CD4-positive, alpha-beta T cell (primary cell): ENCODE measurements at regions of chr9 and their contacts with region 1.

Region 1: DNA sequence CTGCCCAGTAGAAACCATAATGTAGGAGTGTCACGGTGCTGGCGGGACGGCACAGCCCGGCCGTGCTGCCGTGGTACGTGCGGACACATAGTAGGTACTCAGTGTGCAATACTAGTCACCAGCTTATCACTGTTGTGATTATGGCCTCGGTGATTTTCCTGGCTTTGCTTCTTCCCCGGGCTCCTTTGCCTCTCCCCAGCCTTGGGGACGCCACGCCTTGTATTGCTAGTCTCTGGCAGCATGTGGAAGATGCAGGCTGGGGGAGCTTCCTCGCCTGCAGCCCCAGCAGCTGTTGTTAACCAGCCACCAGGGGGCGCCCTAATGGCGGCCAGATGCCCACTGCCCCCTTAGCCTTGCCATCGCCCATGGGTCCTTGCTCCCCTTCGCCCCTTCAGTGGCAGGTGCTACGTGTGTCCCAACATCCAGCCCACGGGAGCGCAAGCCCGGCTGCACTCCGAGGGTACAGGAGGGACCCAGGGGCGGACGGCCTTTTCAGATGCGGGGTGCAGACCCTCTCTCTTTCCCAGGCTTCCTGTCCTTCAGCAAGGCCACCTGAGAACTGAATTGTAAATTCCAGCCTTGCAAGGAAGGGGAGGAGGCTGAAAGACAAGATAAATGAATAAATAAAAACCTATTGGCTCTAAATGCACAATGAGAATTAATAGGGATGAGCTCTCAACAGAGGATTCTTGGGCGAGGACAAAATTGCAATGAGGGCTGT is 8.0 kb downstream of the NTNG2 start:
- DNase-seq: peak; percentile 24 to 78 (median 50)
- ATAC-seq: peak; percentile 52
- H3K4me3 ChIP-seq: no peak overlapping the region
- H3K4me3 Mint-ChIP-seq: no peak overlapping the region
- H3K27ac ChIP-seq: no peak overlapping the region
- H3K27ac Mint-ChIP-seq: no peak overlapping the region
- H3K4me1 ChIP-seq: no peaks in the 10 kb centered on the region
- H3K4me1 Mint-ChIP-seq: no peaks in the 10 kb centered on the region
- H3K27me3 ChIP-seq: peaks cover 20 to 33% of the 10 kb centered on the region in 2 experiments
- H3K27me3 Mint-ChIP-seq: peaks cover 56% of the 10 kb centered on the region
- CTCF ChIP-seq: peak; percentile 93

Region 2: GRCh38 chr9:132032238-132032950 is 137.4 kb before region 1 on chr9:
- CTCF ChIA-PET with region 1: no interaction called
- POLR2A ChIA-PET with region 1: no interaction called
- intact Hi-C with region 1: no loop called
- DNase-seq: no peak
- ATAC-seq: no peak
- H3K4me3 ChIP-seq: no peak overlapping the region
- H3K4me3 Mint-ChIP-seq: no peak overlapping the region
- H3K27ac ChIP-seq: no peak overlapping the region
- H3K27ac Mint-ChIP-seq: no peak overlapping the region
- H3K4me1 ChIP-seq: peaks cover 5% of the 10 kb centered on the region
- H3K4me1 Mint-ChIP-seq: peaks cover 59% of the 10 kb centered on the region
- H3K27me3 ChIP-seq: no peaks in the 10 kb centered on the region
- H3K27me3 Mint-ChIP-seq: no peaks in the 10 kb centered on the region
- CTCF ChIP-seq: no peak

Region 3: DNA sequence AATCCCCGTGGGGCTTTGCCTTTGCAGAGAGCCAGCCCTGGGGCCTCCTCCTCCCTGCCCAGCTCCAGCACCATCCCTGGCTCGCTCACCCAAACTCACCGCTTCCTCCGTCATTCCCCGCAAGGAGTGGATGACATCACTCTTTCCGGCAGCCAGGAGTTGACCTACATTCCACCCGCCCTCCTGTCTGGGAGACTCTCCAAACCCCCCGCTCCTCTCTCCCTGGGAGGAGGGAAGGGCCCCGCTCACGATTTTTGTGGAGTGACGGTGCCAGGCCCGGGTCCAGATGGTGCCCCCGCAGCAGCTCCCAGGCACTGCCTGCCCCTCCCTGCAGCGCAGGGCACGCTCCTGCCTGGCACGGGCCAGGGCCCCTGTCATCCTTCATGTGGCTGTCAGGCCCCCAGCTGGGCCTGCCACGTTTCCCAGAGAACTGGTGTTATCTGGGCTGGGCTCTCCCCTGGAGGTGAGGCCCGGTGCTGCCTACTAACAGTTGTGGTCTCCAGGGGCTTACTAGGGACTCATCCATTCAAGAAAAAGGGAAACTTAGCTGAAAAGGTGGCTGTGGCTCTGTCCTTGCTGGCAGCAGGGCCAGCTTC is 44.3 kb after region 1 on chr9:
- CTCF ChIA-PET with region 1: no interaction called
- POLR2A ChIA-PET with region 1: no interaction called
- intact Hi-C with region 1: no loop called
- DNase-seq: no peak
- ATAC-seq: no peak
- H3K4me3 ChIP-seq: no peak overlapping the region
- H3K4me3 Mint-ChIP-seq: no peak overlapping the region
- H3K27ac ChIP-seq: no peak overlapping the region
- H3K27ac Mint-ChIP-seq: no peak overlapping the region
- H3K4me1 ChIP-seq: no peaks in the 10 kb centered on the region
- H3K4me1 Mint-ChIP-seq: no peaks in the 10 kb centered on the region
- H3K27me3 ChIP-seq: no peaks in the 10 kb centered on the region
- H3K27me3 Mint-ChIP-seq: peaks cover 10% of the 10 kb centered on the region
- CTCF ChIP-seq: no peak

Region 4: GRCh38 chr9:132249123-132249522 is 79.3 kb after region 1 on chr9:
- CTCF ChIA-PET with region 1: interaction called, 4 read pairs
- POLR2A ChIA-PET with region 1: no interaction called
- intact Hi-C with region 1: loop called in 1 of 2 experiments (anchors 1 kb)
- DNase-seq: no peak
- ATAC-seq: no peak
- H3K4me3 ChIP-seq: no peak overlapping the region
- H3K4me3 Mint-ChIP-seq: no peak overlapping the region
- H3K27ac ChIP-seq: no peak overlapping the region
- H3K27ac Mint-ChIP-seq: no peak overlapping the region
- H3K4me1 ChIP-seq: peaks cover 3% of the 10 kb centered on the region
- H3K4me1 Mint-ChIP-seq: no peaks in the 10 kb centered on the region
- H3K27me3 ChIP-seq: peaks cover 6 to 10% of the 10 kb centered on the region in 2 experiments
- H3K27me3 Mint-ChIP-seq: peaks cover 4% of the 10 kb centered on the region
- CTCF ChIP-seq: no peak